ENCODE measurements at regions of chr9 and their contacts with region 1.

Region 1: GRCh38 chr9:72788966-72789735 is 163.7 kb downstream of the ALDH1A1 start:
- DNase-seq: no peak
- H3K4me3 ChIP-seq: no peak overlapping the region
- H3K27ac ChIP-seq: no peak overlapping the region
- H3K4me1 ChIP-seq: no peaks in the 10 kb centered on the region
- H3K27me3 ChIP-seq: no peaks in the 10 kb centered on the region
- CTCF ChIP-seq: no peak
- EP300 ChIP-seq: no peak
- POLR2A ChIP-seq: no peak

Region 2: GRCh38 chr9:72065076-72065475 is 724.1 kb before region 1 on chr9:
- in situ Hi-C with region 1: loop called in 1 of 4 experiments (anchors 25 kb)
- intact Hi-C with region 1: no loop called
- DNase-seq: no peak
- H3K4me3 ChIP-seq: no peak overlapping the region
- H3K27ac ChIP-seq: no peak overlapping the region
- H3K4me1 ChIP-seq: no peaks in the 10 kb centered on the region
- H3K27me3 ChIP-seq: no peaks in the 10 kb centered on the region
- CTCF ChIP-seq: no peak
- EP300 ChIP-seq: no peak
- POLR2A ChIP-seq: no peak

Region 3: DNA sequence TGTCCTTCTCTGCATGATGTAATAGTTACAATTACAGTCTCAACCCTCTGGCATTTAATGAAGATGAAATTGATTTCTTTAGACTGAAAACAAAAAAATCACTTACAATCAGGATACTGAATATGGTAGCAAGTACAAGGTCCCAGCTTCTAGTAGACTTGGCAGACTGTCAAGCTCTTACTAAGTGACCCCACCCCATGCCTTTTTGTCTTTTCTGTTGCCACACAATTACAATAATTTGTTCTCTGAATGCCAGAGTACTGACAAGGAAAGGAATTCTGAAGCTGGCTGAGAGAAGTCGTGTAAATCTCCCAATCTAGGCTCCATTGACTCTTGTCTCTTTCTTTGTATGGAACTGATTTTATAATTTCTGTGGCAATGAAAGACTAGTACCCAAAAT is 113.6 kb before region 1 on chr9:
- in situ Hi-C with region 1: loop called in 1 of 4 experiments (anchors 25 kb)
- intact Hi-C with region 1: no loop called
- DNase-seq: no peak
- H3K4me3 ChIP-seq: no peak overlapping the region
- H3K27ac ChIP-seq: no peak overlapping the region
- H3K4me1 ChIP-seq: no peaks in the 10 kb centered on the region
- H3K27me3 ChIP-seq: no peaks in the 10 kb centered on the region
- CTCF ChIP-seq: no peak
- EP300 ChIP-seq: no peak
- POLR2A ChIP-seq: no peak

Region 4: DNA sequence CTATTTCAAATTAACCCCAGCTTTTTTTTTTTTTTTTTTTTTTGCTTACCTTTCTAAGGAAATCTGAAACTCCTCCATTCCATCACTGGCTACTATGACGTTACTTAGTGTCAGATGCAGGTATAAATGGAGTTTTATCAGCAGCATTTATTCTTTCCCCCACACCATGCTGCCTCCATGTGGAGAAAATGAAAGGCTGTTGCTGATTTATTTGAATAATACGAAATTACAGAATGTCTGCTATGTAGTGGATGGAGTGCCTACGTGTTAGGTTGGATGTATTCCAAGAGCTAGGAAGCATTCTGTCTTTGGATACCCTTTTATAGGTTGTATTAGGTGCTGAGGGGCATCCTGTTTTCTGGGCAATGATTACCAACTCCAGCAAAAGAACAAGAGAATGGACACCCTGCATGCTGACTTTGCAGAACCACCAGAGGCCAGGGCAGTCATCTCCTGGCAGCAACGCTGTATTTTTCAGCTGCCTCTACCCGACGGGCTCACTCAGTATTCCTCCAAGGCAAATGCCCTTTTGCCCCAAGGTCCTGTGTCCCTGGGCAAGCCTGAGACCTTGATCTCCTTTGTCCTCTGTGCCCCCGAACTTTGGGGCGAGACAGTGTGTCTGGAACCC is 35.8 kb before region 1 on chr9:
- in situ Hi-C with region 1: no loop called
- intact Hi-C with region 1: loop called (anchors 2 kb)
- DNase-seq: no peak
- H3K4me3 ChIP-seq: no peak overlapping the region
- H3K27ac ChIP-seq: no peak overlapping the region
- H3K4me1 ChIP-seq: peaks cover 0 to 7% (median 0%) of the 10 kb centered on the region in 4 donors
- H3K27me3 ChIP-seq: no peaks in the 10 kb centered on the region
- CTCF ChIP-seq: peak in 3 of 5 experiments; percentile 12 to 21 (median 21)
- EP300 ChIP-seq: no peak
- POLR2A ChIP-seq: no peak

Region 5: DNA sequence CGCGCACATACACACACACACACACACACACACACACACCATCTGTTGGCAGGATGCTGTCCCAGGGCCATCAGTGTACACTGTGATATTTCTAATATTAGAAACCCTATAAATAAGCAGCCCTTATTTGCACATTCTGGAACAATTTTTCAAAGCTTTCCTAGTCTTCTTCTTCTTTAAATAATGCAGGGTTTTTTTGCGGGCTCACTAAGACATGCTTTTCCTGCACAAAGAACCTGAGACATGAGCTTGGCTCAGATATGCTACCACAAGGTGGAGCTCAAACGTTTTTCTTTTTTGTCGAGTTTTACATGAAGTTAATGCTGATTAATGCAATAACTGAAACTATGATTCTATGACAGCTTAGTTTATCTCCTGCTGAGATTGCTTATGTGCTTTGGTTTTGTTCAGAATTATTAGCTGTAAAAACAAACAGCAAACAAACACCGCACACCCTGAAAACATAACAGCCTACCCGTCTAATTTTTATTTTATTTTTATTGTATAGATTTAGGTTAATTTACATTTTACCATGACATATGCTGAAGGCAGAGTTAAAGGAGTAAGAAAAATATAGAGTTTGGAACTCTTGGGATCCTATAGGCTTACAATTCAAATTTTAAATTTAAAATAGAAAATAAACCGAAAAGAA is 67.9 kb after region 1 on chr9:
- in situ Hi-C with region 1: no loop called
- intact Hi-C with region 1: no loop called
- DNase-seq: no peak
- H3K4me3 ChIP-seq: no peak overlapping the region
- H3K27ac ChIP-seq: peak overlapping the region in 2 of 4 donors; percentile 3 to 37
- H3K4me1 ChIP-seq: peaks cover 12 to 22% (median 14%) of the 10 kb centered on the region in 4 donors
- H3K27me3 ChIP-seq: no peaks in the 10 kb centered on the region
- CTCF ChIP-seq: peak; percentile 57 to 67 (median 60)
- EP300 ChIP-seq: no peak
- POLR2A ChIP-seq: no peak